Activated CD4-positive, alpha-beta T cell treated with anti-CD3 and anti-CD28 coated beads for 36 hours (primary cell): ENCODE measurements at regions of chr11 and their contacts with region 1.

Region 1: GRCh38 chr11:34174412-34175041 is 69.1 kb downstream of the NAT10 start:
- DNase-seq: peak; percentile 92
- ATAC-seq: peak; percentile 99
- H3K4me3 Mint-ChIP-seq: peak overlapping the region; percentile 9
- H3K27ac Mint-ChIP-seq: no peak overlapping the region
- H3K4me1 Mint-ChIP-seq: peaks cover 11% of the 10 kb centered on the region
- H3K27me3 Mint-ChIP-seq: peaks cover 2% of the 10 kb centered on the region

Region 2: DNA sequence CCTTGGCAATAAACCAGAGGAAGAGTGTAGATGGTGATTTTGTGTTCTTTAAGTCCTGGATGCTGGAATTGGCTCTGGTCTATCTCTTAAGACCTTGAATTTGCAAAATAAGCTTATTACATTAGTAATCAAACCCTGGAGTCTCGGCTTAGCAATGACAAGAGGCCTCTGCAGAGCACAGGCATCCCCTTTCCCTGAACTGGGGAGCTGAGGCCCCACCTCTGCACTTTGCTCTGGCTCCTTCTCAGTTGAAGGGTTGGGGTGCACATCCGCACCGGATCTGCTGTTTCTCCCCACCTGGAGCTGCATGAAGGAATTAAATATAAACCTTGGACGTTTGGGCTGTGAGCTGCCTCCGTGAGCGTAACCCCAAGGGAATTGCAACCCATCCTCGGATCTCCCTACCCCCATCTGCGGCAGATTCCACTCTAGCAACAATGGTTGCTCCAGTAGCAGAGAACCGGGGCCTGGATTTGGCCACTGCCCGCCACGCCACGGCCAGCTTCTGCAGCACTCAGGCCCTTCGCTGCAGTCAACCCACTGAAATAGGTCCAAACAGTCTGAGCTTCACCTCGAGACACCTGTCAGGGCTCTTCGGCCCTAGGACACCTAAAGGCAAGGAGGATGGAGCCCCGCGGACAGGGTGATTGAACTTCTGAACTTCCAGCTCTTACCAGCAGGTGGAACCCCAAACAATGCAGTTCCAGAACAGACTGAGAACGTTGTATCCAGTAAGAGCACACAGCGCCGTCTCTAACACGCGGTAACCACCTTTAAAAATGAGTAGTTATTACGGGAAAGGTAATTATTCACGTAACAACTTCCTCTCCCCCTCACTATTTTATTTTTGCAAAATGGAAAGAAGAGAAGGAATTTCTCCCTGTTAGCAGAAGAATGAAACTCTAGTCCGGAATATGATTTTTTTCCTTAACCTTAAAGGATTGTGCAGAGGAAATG is 177.8 kb before region 1 on chr11:
- CTCF ChIA-PET with region 1: interaction called, 6 read pairs
- POLR2A ChIA-PET with region 1: no interaction called
- intact Hi-C with region 1: loop called in 1 of 2 experiments (anchors 1 kb)
- DNase-seq: peak; percentile 84
- ATAC-seq: peak; percentile 99
- H3K4me3 Mint-ChIP-seq: no peak overlapping the region
- H3K27ac Mint-ChIP-seq: no peak overlapping the region
- H3K4me1 Mint-ChIP-seq: peaks cover 9% of the 10 kb centered on the region
- H3K27me3 Mint-ChIP-seq: peaks cover 11% of the 10 kb centered on the region

Region 3: DNA sequence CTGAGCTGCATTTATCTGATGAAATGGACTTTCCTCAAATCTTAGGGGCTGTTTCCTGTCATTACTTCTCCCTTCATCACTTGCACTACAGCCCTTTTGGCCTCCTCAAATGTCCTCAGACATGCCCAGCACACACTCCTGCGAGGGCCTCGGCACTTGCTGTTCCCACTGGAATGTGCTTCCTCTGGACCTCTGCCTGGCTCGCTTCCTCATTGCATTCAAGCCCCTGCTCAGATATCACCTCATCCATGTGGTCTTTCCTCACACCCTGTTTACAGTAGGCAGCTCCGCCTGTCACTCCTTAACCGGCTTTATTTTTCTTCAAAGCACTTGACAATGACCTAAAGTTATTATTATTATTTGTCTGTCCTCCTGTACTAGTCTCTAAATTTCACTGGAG is 60.1 kb before region 1 on chr11:
- CTCF ChIA-PET with region 1: no interaction called
- POLR2A ChIA-PET with region 1: no interaction called
- intact Hi-C with region 1: no loop called
- DNase-seq: no peak
- ATAC-seq: no peak
- H3K4me3 Mint-ChIP-seq: no peak overlapping the region
- H3K27ac Mint-ChIP-seq: peak overlapping the region; percentile 26
- H3K4me1 Mint-ChIP-seq: peaks cover 5% of the 10 kb centered on the region
- H3K27me3 Mint-ChIP-seq: no peaks in the 10 kb centered on the region

Region 4: DNA sequence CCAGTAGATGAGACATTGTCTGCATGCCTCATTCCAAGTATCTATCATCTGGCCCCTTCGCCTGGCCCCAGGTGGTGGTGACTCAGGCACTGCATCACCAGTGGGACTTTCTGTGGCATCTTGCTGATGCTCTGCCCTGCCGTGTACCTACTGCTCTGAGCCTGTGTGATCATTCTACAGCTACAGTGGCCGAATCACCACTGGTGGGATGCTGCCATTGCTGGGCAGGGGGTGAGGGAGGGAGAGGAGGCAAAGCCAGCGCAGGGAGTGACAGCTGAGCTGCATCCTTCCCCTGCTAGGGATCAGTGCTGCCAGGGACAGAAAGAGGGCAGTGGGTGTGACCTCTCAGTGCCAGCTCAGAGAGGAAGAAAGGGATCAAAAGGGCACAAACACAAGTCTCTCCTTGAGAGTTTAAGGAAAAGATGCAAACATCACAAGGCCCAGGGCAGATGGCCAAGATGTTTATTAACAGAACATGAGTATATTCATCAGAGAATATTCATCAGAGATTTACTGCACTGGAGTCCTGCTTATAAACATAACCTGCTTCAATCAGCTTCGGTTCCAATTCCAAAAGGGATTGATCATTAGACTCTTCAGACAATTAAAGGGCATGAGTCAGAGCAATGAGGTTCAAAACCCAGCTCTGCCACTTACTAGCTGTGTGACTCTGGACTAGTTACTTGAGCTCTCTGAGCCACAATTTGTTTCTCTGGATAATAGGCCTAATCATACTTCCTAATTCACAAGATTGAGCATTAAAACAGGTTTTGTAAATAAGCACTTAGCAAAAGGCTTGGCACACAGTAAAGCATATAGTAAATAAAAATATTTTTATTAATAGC is 40.7 kb after region 1 on chr11:
- CTCF ChIA-PET with region 1: interaction called, 11 read pairs
- POLR2A ChIA-PET with region 1: no interaction called
- intact Hi-C with region 1: no loop called
- DNase-seq: peak; percentile 92
- ATAC-seq: peak; percentile 99
- H3K4me3 Mint-ChIP-seq: no peak overlapping the region
- H3K27ac Mint-ChIP-seq: peak overlapping the region; percentile 74
- H3K4me1 Mint-ChIP-seq: peaks cover 22% of the 10 kb centered on the region
- H3K27me3 Mint-ChIP-seq: peaks cover 6% of the 10 kb centered on the region

Region 5: DNA sequence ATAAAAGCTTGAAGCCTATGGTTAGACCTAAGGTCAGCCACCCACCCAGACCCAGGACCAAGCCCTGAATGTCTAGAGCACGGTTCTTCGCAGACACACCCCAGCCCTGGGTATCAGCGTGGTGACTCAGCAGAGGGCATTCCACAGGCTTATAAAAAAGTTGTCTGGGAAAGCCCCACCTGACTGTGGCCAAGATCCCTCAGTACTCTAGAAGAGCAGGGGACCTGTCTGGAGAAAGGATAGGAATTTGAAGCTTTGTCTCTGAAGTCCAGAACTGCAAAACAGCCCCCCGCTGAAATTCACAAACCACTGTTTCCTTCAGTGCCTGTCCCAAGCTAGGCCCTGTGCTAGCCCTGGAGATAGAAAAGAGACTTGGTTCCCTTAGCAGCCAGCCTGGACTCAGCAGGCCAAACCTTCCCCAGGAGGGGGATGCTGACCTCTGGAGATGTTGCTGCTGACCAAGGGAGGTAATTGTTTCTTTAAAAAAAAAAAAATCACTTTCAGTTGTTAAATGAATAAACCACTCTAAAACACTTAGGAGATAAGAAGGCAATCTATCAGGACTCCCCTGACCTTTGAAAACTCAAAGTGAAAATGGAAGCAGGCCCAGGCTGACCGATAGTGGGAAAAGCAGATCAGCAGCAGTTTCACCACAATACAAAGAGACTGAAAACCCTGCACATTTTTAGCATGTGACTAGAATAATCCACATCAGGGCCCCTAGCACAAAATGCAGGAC is 69.4 kb after region 1 on chr11:
- CTCF ChIA-PET with region 1: interaction called, 12 read pairs
- POLR2A ChIA-PET with region 1: no interaction called
- intact Hi-C with region 1: loop called in 1 of 2 experiments (anchors 2 kb)
- DNase-seq: peak; percentile 79
- ATAC-seq: peak; percentile 65
- H3K4me3 Mint-ChIP-seq: no peak overlapping the region
- H3K27ac Mint-ChIP-seq: no peak overlapping the region
- H3K4me1 Mint-ChIP-seq: peaks cover 88% of the 10 kb centered on the region
- H3K27me3 Mint-ChIP-seq: peaks cover 2% of the 10 kb centered on the region

Region 6: DNA sequence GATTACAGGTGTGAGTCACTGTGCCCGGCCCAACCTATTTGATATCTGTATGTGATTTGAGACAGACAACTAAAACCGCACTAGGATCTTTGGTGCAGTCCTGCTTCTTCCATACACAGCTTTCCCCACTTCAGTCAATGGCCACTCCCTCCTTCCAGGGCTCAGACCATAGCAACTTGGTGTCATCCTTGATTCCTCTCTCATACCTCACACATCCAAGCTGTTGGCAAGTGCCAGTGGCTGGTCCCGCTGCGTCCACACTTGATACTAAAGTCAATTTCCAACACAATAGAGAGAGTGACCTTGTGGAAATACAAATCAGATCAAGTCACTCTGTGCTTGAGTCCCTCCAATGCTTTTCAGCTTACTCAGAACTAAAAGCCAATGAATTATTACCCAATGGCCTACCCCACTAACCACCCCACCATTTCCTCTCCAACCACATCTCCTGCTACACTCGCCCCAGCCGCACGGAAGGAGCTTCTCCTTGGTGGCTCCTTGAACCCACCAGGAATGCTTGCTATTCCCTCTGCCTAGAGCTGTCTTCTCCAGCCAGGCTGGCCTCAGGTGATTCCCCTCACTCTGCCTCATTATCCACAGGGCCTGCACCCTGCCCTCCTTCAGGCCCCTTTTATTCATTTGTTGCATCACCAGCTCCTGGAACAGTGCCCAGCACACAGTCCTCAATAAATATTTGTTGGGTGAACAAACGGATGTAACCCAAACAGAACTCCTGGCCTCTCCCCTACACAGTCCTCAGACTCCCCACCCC is 170.4 kb after region 1 on chr11:
- CTCF ChIA-PET with region 1: interaction called, 25 read pairs
- POLR2A ChIA-PET with region 1: no interaction called
- intact Hi-C with region 1: no loop called
- DNase-seq: no peak
- ATAC-seq: no peak
- H3K4me3 Mint-ChIP-seq: no peak overlapping the region
- H3K27ac Mint-ChIP-seq: no peak overlapping the region
- H3K4me1 Mint-ChIP-seq: no peaks in the 10 kb centered on the region
- H3K27me3 Mint-ChIP-seq: no peaks in the 10 kb centered on the region

Region 7: GRCh38 chr11:34366522-34366921 is 192.0 kb after region 1 on chr11:
- CTCF ChIA-PET with region 1: interaction called, 61 read pairs
- POLR2A ChIA-PET with region 1: no interaction called
- intact Hi-C with region 1: no loop called
- DNase-seq: peak; percentile 46
- ATAC-seq: no peak
- H3K4me3 Mint-ChIP-seq: no peak overlapping the region
- H3K27ac Mint-ChIP-seq: no peak overlapping the region
- H3K4me1 Mint-ChIP-seq: peaks cover 13% of the 10 kb centered on the region
- H3K27me3 Mint-ChIP-seq: peaks cover 10% of the 10 kb centered on the region

Region 8: GRCh38 chr11:34492806-34493414 is 318.4 kb after region 1 on chr11:
- CTCF ChIA-PET with region 1: interaction called, 8 read pairs
- POLR2A ChIA-PET with region 1: no interaction called
- intact Hi-C with region 1: loop called (anchors 1 to 5 kb)
- DNase-seq: peak; percentile 63
- ATAC-seq: no peak
- H3K4me3 Mint-ChIP-seq: no peak overlapping the region
- H3K27ac Mint-ChIP-seq: no peak overlapping the region
- H3K4me1 Mint-ChIP-seq: no peaks in the 10 kb centered on the region
- H3K27me3 Mint-ChIP-seq: no peaks in the 10 kb centered on the region